BJ (cell line): ENCODE measurements at regions of chr11 and their contacts with region 1.

Region 1: DNA sequence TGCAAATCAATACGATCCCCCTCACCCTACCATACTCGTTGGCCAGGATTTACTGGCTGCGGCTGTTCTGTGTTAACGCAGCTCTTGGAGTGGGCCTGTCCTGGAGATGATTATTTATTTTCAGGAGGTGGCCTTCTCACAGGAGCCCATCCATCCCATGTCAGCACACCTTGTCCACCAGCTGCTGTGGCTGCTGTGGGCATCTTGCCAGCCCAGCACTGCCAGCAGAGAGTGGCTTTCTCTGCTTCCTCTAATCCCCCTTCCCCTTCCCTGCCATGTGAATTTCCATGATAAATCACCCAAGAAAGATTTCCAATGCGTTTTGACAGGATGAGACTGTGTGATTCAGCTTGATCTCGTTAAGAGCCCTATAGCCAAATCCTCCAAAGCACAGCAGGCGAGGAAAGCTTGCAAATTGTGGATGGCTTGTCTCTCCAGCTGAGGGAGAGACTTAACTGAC is 309.1 kb upstream of the C11orf87 start:
- DNase-seq: no peak
- H3K4me3 ChIP-seq: no peak overlapping the region
- H3K27me3 ChIP-seq: 0 out of 2 replicates have a peak, but pooled peaks cover 2% of the 10 kb centered on the region
- CTCF ChIP-seq: no peak

Region 2: DNA sequence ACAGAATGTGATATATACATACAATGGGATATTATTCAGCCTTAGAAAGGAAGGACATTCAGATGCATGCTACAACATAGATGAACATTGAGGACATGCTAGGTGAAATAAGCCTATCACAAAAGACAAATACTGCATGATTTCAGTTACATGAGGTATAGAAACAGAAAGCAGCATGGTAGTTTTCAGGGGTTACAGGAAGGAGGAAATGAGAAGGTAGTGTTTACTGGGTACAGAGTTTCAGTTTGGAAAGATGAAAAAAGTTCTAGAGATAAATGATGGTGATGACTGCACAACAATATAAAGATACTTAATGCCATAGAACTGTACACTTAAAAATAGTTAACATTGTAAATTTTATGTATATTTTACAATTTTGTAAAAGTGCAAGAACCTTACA is 42.4 kb after region 1 on chr11:
- CTCF ChIA-PET with region 1: no interaction called
- POLR2A ChIA-PET with region 1: no interaction called
- DNase-seq: no peak
- H3K4me3 ChIP-seq: no peak overlapping the region
- H3K27me3 ChIP-seq: no peaks in the 10 kb centered on the region
- CTCF ChIP-seq: no peak

Region 3: DNA sequence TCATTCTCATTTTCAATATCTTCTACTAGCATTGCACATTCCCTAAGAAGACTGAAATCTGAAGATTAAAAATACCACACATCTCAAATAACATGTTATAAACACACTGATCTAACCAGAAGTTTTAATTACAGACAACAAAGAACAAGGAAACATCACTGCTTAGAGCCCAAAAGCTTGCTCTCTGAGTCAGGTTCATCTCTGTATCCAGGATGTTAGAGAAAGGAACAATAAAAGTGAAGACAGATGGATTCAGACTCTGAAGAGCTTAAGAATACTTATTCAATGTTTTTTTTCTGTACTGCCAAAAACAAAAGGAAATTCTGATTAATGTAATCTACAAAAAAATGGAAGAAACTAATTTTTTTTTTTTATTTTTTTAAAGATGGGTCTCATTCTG is 1167.0 kb after region 1 on chr11:
- CTCF ChIA-PET with region 1: no interaction called
- POLR2A ChIA-PET with region 1: interaction called, 12 read pairs
- DNase-seq: no peak
- H3K4me3 ChIP-seq: no peak overlapping the region
- H3K27me3 ChIP-seq: no peaks in the 10 kb centered on the region
- CTCF ChIP-seq: no peak